Gastrocnemius medialis (tissue), 4 donors: ENCODE measurements at regions of chr11 and their contacts with region 1.

Region 1: GRCh38 chr11:35617687-35618496 is at the start of gene FJX1:
- DNase-seq: peak; percentile 4 to 12
- ATAC-seq: peak; percentile 52 to 53
- H3K4me3 ChIP-seq: peak within 1 kb of the TSS; percentile 55 to 78 (median 64)
- H3K27ac ChIP-seq: peak within 1 kb of the TSS; percentile 56 to 63 (median 60)
- H3K4me1 ChIP-seq: peaks cover 9 to 22% of the 10 kb centered on the region in 2 donors
- H3K27me3 ChIP-seq: peaks cover 0 to 8% (median 2%) of the 10 kb centered on the region in 3 donors
- CTCF ChIP-seq: no peak
- POLR2A ChIP-seq: no peak
- total RNA-seq, gene FJX1: 1.5 to 10.8 (median 2.0) TPM

Region 2: GRCh38 chr11:35598254-35599125 is 19.4 kb before region 1 on chr11:
- in situ Hi-C with region 1: no loop called
- intact Hi-C with region 1: no loop called
- DNase-seq: no peak
- ATAC-seq: no peak
- H3K4me3 ChIP-seq: no peak overlapping the region
- H3K27ac ChIP-seq: no peak overlapping the region
- H3K4me1 ChIP-seq: no peaks in the 10 kb centered on the region
- H3K27me3 ChIP-seq: no peaks in the 10 kb centered on the region
- CTCF ChIP-seq: no peak
- POLR2A ChIP-seq: no peak

Region 3: DNA sequence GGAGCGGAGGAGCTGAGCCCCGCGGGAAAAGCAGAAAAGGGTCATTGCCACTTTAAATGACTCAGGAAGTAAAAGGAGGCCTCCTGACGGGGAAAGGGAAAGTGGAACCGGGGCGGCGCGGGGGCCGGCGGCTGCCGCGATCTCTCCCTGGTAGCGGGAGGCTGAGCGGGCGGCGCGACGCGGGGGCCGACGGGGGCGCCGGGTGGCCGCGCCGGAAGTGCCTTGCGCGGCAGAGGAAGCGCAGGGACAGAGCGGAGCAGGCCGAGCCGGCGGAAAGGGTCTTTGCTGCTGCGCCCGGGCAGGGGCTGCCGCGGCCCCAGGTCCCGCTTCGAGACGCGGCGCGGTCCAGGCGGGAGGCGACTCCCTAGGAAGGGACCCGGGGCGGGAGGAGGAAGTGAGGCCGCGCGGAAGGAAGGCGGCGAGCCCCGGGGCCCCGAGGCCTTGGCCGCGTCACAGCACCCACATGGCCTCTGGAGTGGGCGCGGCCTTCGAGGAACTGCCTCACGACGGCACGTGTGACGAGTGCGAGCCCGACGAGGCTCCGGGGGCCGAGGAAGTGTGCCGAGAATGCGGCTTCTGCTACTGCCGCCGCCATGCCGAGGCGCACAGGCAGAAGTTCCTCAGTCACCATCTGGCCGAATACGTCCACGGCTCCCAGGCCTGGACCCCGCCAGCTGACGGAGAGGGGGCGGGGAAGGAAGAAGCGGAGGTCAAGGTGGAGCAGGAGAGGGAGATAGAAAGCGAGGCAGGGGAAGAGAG is 44.9 kb after region 1 on chr11 and contains the start of gene TRIM44:
- in situ Hi-C with region 1: no loop called
- intact Hi-C with region 1: loop called (anchors 1 kb)
- DNase-seq: peak; percentile 73 to 84
- ATAC-seq: peak; percentile 95 to 97
- H3K4me3 ChIP-seq: peak within 1 kb of the TSS; percentile 82 to 91 (median 88)
- H3K27ac ChIP-seq: peak within 1 kb of the TSS; percentile 91 to 97 (median 94)
- H3K4me1 ChIP-seq: peaks cover 22 to 29% of the 10 kb centered on the region in 2 donors
- H3K27me3 ChIP-seq: no peaks in the 10 kb centered on the region
- CTCF ChIP-seq: no peak
- POLR2A ChIP-seq: peak; percentile 70 to 75
- total RNA-seq, gene TRIM44: 25.5 to 30.5 (median 26.2) TPM

Region 4: GRCh38 chr11:36034551-36035331 is 416.8 kb after region 1 on chr11:
- in situ Hi-C with region 1: loop called in 1 of 4 experiments (anchors 10 kb)
- intact Hi-C with region 1: no loop called
- DNase-seq: no peak
- ATAC-seq: no peak
- H3K4me3 ChIP-seq: no peak overlapping the region
- H3K27ac ChIP-seq: no peak overlapping the region
- H3K4me1 ChIP-seq: peaks cover 3 to 8% of the 10 kb centered on the region in 2 donors
- H3K27me3 ChIP-seq: no peaks in the 10 kb centered on the region
- CTCF ChIP-seq: no peak
- POLR2A ChIP-seq: no peak

Region 5: DNA sequence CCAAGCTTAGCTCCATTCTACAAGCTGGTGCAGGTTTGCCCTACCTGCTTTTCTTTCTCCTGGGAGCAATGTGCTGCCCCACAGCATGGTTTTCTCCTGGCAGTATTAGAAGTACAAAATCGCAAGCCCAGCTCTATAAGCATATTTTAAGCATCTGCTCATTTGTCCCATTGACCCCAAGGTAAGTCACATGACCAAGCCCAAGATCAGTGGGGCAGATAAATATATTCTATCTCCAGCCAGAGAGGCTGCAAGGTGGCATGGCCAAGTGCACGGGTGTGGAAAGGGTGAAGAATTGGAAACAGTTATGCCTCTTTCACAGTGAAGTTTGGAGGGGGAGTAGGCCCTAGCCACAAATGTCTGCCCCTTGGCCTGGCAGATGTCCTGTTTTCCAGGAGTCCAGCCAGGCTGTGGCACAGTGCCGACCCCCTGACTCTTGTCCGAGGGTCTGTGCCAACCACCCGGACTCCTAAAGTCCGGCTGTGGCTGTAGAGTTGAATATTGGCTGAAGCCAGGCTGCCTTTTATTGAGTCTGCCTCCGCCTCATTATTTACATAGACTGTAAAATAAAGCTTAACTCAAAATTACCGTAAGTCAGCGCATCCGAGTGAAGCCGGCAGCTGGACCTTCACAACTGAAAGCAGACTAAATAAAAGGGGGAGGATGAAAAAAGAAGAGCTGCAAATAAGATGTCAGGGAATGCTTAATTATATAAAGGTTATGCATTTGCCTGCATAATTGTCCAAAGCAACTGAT is 505.6 kb after region 1 on chr11:
- in situ Hi-C with region 1: loop called in 2 of 4 experiments (anchors 10 to 25 kb)
- intact Hi-C with region 1: no loop called
- DNase-seq: no peak
- ATAC-seq: no peak
- H3K4me3 ChIP-seq: no peak overlapping the region
- H3K27ac ChIP-seq: peak overlapping the region in 1 of 4 donors; percentile 23
- H3K4me1 ChIP-seq: peaks cover 5 to 7% of the 10 kb centered on the region in 2 donors
- H3K27me3 ChIP-seq: no peaks in the 10 kb centered on the region
- CTCF ChIP-seq: no peak
- POLR2A ChIP-seq: no peak

Region 6: GRCh38 chr11:36149538-36150242 is 531.8 kb after region 1 on chr11:
- in situ Hi-C with region 1: loop called in 1 of 4 experiments (anchors 25 kb)
- intact Hi-C with region 1: no loop called
- DNase-seq: peak; percentile 54 to 65
- ATAC-seq: peak; percentile 96 to 99
- H3K4me3 ChIP-seq: no peak overlapping the region
- H3K27ac ChIP-seq: peak overlapping the region in 3 of 4 donors; percentile 53 to 68 (median 55)
- H3K4me1 ChIP-seq: peaks cover 5% of the 10 kb centered on the region in 2 donors
- H3K27me3 ChIP-seq: no peaks in the 10 kb centered on the region
- CTCF ChIP-seq: peak in 4 of 5 experiments; percentile 18 to 45 (median 38)
- POLR2A ChIP-seq: peak in 1 of 2 donors; percentile 22

Region 7: DNA sequence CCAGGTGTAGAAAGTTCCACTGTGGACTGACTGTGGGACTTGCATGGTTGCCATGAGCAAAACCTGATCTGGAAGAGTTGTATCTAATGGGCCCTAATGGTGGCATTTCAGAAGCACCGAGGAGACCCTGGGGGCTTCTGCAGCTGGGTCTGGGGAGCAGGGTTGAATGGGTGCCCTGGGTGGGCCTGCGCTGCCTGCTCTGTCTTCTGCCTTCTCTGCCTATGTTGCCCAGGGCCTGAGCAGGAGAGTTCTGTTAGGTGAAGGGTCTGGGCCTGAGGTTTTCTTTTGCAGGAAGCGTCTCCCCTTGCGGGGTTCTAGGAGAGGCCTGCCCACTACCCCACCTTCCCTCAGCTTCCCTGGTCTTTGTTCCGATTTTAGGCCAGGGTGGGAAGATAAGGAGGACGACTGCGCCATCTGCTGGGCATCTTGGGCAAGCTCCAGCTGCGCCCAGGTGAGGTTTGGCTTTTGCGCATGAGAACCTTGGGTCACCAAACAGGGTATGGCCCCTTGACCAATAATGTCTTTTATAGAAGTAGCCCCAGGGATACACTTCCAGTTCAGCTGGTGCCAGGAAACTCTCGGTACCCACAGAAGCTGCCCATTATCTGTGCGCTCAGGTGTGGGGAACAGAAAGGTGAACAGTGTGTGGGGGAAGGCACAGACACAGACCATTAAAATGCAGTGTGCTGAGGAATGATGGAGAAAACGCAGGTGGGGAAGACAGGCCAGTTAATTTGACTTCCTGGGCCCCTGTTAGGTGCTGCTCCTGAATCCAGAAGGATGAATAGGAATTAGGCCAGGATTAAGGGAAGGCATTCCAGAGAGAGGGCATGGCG is 648.1 kb after region 1 on chr11:
- in situ Hi-C with region 1: loop called (anchors 5 kb)
- intact Hi-C with region 1: loop called (anchors 1 kb)
- DNase-seq: no peak
- ATAC-seq: peak; percentile 67 to 69
- H3K4me3 ChIP-seq: no peak overlapping the region
- H3K27ac ChIP-seq: no peak overlapping the region
- H3K4me1 ChIP-seq: no peaks in the 10 kb centered on the region
- H3K27me3 ChIP-seq: no peaks in the 10 kb centered on the region
- CTCF ChIP-seq: peak; percentile 52 to 83 (median 77)
- POLR2A ChIP-seq: no peak